GM23248 (cell line): ENCODE measurements at regions of chr5 and their contacts with region 1.

Region 1: DNA sequence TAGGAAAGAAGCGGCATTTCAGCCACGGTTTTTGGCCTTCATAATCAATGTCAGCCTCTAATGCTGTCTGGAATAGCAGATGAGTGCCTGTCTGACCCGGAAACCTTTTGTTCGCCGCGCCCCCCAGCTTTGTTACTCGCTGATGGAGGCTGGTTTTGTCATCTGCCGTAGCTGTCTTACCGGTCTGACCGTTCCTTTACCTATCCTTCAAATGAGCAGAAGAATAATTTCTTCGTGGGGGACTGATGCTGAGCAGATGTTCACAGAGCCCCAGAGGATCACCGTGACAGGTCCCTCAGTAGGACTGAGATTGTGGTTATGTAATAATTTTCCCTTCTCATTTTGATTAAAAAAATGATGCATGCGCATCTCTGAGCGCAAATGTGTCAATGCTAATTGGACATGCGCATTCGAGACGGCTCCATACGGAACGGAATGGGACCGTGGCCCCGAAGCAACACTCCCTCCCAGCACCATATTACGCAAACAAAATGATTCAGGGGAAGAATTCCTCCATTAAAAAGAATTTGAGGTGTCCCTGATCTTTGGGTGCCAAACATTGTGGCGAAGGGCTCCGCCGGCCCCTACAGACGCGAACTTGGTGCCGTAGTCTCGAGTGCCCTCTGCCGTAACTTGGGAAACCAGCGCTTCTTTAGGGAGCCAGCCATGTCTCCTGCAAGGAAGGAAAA is 27.6 kb downstream of the TLX3 start:
- DNase-seq: peak; percentile 84
- H3K4me3 ChIP-seq: peak overlapping the region; percentile 76
- H3K27ac ChIP-seq: no peak overlapping the region
- H3K4me1 ChIP-seq: peaks cover 3% of the 10 kb centered on the region; the same call in 1 of the 2 replicates
- H3K27me3 ChIP-seq: peaks cover 17% of the 10 kb centered on the region; the same call in 1 of the 2 replicates

Region 2: DNA sequence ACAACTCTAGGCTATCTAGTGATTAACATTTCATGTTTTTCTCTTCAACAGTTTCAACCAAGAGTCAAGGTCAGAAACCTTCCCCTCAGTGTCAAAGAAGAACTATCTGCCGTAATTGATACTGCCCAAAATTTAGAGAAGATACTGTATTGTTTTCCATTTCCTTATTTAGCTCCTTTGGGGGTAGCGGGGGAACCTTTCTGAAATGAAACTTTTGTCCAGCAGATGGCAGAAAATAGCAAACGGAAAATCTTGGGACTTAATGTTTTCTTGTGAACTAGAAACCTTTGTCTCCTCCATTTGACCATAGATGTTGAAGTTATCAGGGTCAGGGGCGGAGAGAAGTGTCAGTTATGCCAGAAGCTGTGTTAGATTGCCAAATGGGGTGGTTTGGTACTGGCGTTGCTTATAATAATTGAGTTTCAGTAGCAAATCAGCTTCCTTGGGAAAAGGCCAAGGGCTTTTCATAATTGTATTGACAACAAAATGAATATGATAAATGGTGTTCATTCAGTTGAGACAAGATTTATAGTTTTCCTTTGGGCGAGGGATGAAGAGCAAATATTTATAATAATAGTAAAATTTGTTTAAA is 129.3 kb before region 1 on chr5:
- in situ Hi-C with region 1: loop called (anchors 5 kb)
- DNase-seq: peak; percentile 70
- H3K4me3 ChIP-seq: no peak overlapping the region
- H3K27ac ChIP-seq: no peak overlapping the region
- H3K4me1 ChIP-seq: no peaks in the 10 kb centered on the region
- H3K27me3 ChIP-seq: no peaks in the 10 kb centered on the region